Tibial artery (tissue), 4 donors: ENCODE measurements at regions of chr7 and their contacts with region 1.

Region 1: DNA sequence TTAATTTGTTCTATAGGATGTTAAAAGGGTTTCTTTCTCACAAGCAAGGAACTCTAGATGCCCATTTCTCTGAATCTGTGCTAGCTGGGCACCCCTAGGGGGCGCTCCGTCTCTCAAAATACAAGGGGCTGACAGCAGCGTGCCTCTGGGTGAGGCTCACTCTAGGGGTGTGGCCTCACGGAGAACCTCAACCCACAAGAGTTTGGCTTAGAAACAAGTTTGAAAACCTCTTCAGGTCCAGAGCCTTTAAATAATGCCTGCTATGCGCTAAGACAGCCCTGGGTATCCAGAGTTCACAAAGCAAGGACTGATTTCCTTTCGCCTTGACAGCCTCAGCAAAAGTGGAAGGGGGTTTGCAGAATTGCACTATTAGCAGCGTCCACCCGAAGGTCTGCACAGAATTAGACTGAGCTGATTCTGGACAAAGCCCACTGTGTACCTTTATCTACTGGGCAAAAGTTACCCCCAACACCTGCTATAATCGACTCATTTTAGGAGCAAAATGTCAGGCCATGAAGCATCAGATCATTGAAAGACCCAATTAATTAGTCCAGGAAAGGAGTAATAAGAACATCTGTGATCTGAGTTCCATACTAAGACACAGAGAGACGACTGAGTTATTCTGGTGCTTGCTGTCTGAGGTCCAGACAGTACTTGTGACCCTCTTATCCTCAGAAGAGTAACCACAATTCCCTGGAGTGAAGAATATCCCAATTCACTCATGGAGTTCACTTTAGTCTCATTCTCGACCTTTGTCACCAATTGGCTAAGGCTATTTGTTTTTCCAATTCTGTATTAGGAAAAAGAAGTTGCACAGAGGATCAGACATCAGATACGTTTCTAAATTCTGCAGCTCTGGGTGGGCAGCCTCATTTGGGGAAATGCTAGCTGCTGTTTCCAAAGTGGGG is 574 bp upstream of the CPED1 start:
- DNase-seq: peak; percentile 95
- H3K4me3 ChIP-seq: peak overlapping the region; percentile 63
- H3K27ac ChIP-seq: peak overlapping the region; percentile 87 to 89
- H3K4me1 ChIP-seq: peaks cover 0 to 13% (median 2%) of the 10 kb centered on the region in 4 donors
- H3K27me3 ChIP-seq: no peaks in the 10 kb centered on the region
- CTCF ChIP-seq: peak; percentile 92

Region 2: GRCh38 chr7:120894254-120894653 is 93.7 kb before region 1 on chr7:
- intact Hi-C with region 1: no loop called
- DNase-seq: no peak
- H3K4me3 ChIP-seq: no peak overlapping the region
- H3K27ac ChIP-seq: no peak overlapping the region
- H3K4me1 ChIP-seq: no peaks in the 10 kb centered on the region
- H3K27me3 ChIP-seq: no peaks in the 10 kb centered on the region
- CTCF ChIP-seq: no peak

Region 3: DNA sequence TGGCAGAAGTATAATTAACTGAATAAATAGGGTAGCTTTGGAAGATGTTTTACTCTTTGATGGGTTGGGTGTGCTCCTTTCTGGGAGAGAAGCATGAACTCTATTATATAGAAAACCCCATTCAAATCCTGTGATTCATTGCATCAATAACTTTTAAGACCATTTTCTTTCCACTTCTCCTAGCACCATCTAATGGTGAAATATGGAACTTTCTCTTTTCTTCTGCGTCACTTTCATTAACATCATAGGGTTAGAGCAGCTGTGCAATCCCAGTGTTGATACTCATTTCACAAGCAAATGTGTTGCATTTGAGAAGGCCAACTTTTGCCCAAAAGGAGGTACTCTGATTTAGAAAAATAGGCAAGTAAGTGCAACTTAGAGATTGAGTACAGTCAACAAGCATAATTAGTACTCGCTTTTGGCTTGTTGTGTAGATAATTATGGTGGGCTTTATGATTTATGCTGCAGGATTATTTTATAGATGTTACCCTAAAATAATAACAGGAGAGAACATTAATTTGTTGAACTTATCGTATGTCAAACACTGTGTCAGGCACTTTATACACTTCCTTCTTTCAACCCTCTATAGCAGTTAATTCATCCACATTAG is 93.5 kb after region 1 on chr7:
- intact Hi-C with region 1: loop called (anchors 2 kb)
- DNase-seq: no peak
- H3K4me3 ChIP-seq: no peak overlapping the region
- H3K27ac ChIP-seq: peak overlapping the region in 1 of 2 donors; percentile 76
- H3K4me1 ChIP-seq: peaks cover 0 to 90% (median 34%) of the 10 kb centered on the region in 4 donors
- H3K27me3 ChIP-seq: no peaks in the 10 kb centered on the region
- CTCF ChIP-seq: peak; percentile 69 to 88